AG04449 (cell line): ENCODE measurements at regions of chr17 and their contacts with region 1.

Region 1: DNA sequence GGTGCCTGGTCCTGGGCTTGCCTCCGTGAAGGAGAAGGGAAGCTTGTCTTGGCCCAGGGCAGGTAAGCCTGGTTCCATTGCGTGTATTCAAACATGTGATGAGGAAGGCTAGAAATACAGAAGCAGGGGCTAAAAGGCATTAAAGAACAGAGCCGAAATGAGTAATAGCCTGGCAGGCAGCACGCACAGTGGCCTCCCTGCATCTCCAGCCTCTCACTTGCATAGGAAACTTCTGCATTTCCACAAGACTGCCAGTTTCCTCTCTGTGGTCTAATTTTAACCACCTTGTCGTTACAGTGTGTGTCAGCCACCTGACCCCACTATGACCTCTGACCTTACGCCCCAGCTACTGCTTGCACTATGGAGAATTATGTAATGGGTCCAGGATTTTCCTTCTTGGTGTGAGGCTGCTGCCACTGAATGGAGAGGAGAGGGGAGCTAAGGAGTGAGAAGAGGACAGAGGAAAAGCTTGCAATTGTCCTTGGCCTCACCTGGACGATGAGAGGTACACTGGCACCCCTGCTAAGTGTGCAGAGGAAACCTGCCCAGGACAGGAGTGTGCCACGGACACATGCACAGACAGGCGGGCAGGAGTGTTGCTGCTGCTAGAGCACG is 32.8 kb downstream of the HIC1 start:
- DNase-seq: no peak
- H3K4me3 ChIP-seq: no peak overlapping the region
- CTCF ChIP-seq: no peak

Region 2: GRCh38 chr17:2075336-2076086 is 12.2 kb before region 1 on chr17:
- CTCF ChIA-PET with region 1: interaction called, 15 read pairs
- POLR2A ChIA-PET with region 1: no interaction called
- DNase-seq: no peak
- H3K4me3 ChIP-seq: no peak overlapping the region
- CTCF ChIP-seq: no peak

Region 3: DNA sequence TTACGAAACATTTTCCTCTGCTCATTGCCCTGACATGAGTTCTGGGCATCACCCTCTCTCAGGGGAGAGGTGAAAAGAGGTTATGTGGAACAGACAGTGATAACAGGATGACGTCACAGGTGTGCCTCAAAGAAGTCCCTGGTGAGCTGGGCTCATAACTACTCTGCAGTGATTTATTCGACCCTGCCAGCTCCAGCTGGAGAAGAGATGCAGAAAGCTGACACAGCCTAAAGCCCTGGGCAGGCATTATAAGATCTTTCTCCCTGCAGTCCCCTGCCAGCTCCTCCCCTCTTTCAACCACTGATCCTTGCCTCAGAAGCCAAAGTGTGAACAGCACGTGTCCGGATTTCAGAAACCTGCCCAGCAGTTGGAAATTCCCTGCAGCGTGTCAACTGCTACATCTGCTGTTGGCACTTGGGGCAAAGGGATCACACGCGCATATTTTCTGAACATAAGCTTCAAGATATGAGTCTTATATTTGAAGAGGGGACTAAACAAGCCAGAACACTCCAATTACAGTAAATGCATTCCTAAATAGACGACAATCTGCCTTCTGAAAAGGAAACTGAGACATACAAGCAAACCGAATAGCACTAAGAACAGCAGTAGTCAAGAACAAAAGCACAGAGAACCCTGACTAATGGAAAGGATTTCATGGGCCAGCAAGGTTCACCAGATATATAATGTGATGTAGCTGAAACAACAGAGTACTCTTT is 135.4 kb after region 1 on chr17:
- CTCF ChIA-PET with region 1: no interaction called
- POLR2A ChIA-PET with region 1: no interaction called
- DNase-seq: no peak
- H3K4me3 ChIP-seq: no peak overlapping the region
- CTCF ChIP-seq: no peak

Region 4: GRCh38 chr17:2336215-2336851 is 248.6 kb after region 1 on chr17 and contains the start of gene TSR1:
- CTCF ChIA-PET with region 1: no interaction called
- POLR2A ChIA-PET with region 1: no interaction called
- DNase-seq: peak; percentile 28
- H3K4me3 ChIP-seq: peak within 1 kb of the TSS; percentile 93
- CTCF ChIP-seq: peak; percentile 58